ENCODE measurements at regions of chr13 and their contacts with region 1.

Region 1: GRCh38 chr13:23915308-23915707 is 18.0 kb upstream of the C1QTNF9B start:
- DNase-seq: no peak
- ATAC-seq: no peak
- H3K4me3 ChIP-seq: no peak overlapping the region
- H3K27ac ChIP-seq: no peak overlapping the region
- H3K4me1 ChIP-seq: no peaks in the 10 kb centered on the region
- H3K27me3 ChIP-seq: no peaks in the 10 kb centered on the region
- CTCF ChIP-seq: no peak
- POLR2A ChIP-seq: no peak
- RAD21 ChIP-seq: no peak

Region 2: GRCh38 chr13:24228852-24229458 is 313.6 kb after region 1 on chr13:
- CTCF ChIA-PET with region 1: interaction called, 5 read pairs
- POLR2A ChIA-PET with region 1: no interaction called
- dilution Hi-C with region 1: no loop called
- in situ Hi-C with region 1: loop called (anchors 5 kb)
- intact Hi-C with region 1: no loop called
- DNase-seq: peak; percentile 81
- ATAC-seq: peak; percentile 54
- H3K4me3 ChIP-seq: no peak overlapping the region
- H3K27ac ChIP-seq: no peak overlapping the region
- H3K4me1 ChIP-seq: peaks cover 6% of the 10 kb centered on the region; the same call in 1 of the 2 replicates
- H3K27me3 ChIP-seq: no peaks in the 10 kb centered on the region
- CTCF ChIP-seq: peak; percentile 87
- POLR2A ChIP-seq: no peak
- RAD21 ChIP-seq: peak; percentile 79